ENCODE measurements at regions of chr1 and their contacts with region 1.

Region 1: GRCh38 chr1:5745776-5746610 is 246.2 kb downstream of the NPHP4 start:
- DNase-seq: peak; percentile 75
- H3K4me3 Mint-ChIP-seq: no peak overlapping the region
- H3K27ac Mint-ChIP-seq: no peak overlapping the region
- H3K4me1 Mint-ChIP-seq: peaks cover 6% of the 10 kb centered on the region
- H3K27me3 Mint-ChIP-seq: peaks cover 18% of the 10 kb centered on the region
- CTCF ChIP-seq: peak; percentile 97

Region 2: GRCh38 chr1:4655674-4656532 is 1090.1 kb before region 1 on chr1:
- CTCF ChIA-PET with region 1: no interaction called
- POLR2A ChIA-PET with region 1: no interaction called
- intact Hi-C with region 1: loop called (anchors 2 kb)
- DNase-seq: peak; percentile 75
- H3K4me3 Mint-ChIP-seq: no peak overlapping the region
- H3K27ac Mint-ChIP-seq: no peak overlapping the region
- H3K4me1 Mint-ChIP-seq: no peaks in the 10 kb centered on the region
- H3K27me3 Mint-ChIP-seq: no peaks in the 10 kb centered on the region
- CTCF ChIP-seq: peak; percentile 63

Region 3: DNA sequence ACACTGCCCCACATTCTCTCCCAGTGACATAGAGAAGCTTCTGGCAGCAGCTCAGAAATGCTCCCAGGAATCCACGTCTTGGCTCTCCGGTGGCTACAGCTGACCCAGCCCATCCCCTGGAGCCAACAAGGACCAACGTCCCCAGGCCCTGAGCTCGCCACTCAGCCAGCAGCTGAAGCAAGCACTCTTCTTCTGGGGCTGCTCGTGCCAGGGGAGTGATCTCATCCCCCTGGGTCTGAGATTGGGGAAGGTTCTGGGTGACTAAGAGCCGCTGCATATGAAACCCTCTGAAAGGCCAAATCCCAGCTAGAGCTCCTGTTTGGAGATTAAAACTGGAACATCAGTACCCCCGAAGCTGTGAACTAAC is 241.7 kb before region 1 on chr1:
- CTCF ChIA-PET with region 1: interaction called, 144 read pairs
- POLR2A ChIA-PET with region 1: interaction called, 3 read pairs
- intact Hi-C with region 1: no loop called
- DNase-seq: peak; percentile 16
- H3K4me3 Mint-ChIP-seq: peak overlapping the region; percentile 21
- H3K27ac Mint-ChIP-seq: peak overlapping the region; percentile 46
- H3K4me1 Mint-ChIP-seq: peaks cover 33% of the 10 kb centered on the region
- H3K27me3 Mint-ChIP-seq: peaks cover 3% of the 10 kb centered on the region
- CTCF ChIP-seq: no peak

Region 4: DNA sequence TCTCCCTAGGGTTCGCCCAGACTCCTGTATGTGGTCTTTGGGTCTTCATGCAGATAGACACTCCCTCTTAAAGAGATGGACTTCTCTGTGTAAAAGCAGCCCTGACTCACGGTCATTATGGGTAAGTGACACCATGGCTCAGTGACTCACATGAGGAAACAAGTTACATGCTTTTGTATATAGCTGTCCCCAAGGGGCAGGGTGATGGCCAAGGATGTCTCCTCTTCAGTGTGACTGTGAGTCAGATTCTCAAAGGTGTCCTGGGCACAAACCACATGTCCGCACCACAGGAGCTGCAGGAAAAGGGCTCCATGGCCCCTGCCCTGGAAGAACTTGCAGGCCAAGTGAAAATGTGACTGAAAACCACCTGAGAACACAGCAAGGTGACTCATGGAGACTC is 134.1 kb before region 1 on chr1:
- CTCF ChIA-PET with region 1: interaction called, 12 read pairs
- POLR2A ChIA-PET with region 1: no interaction called
- intact Hi-C with region 1: no loop called
- DNase-seq: no peak
- H3K4me3 Mint-ChIP-seq: no peak overlapping the region
- H3K27ac Mint-ChIP-seq: no peak overlapping the region
- H3K4me1 Mint-ChIP-seq: peaks cover 26% of the 10 kb centered on the region
- H3K27me3 Mint-ChIP-seq: peaks cover 9% of the 10 kb centered on the region
- CTCF ChIP-seq: no peak

Region 5: GRCh38 chr1:5637171-5637570 is 108.8 kb before region 1 on chr1:
- CTCF ChIA-PET with region 1: interaction called, 55 read pairs
- POLR2A ChIA-PET with region 1: no interaction called
- intact Hi-C with region 1: loop called (anchors 1 kb)
- DNase-seq: peak; percentile 51
- H3K4me3 Mint-ChIP-seq: no peak overlapping the region
- H3K27ac Mint-ChIP-seq: no peak overlapping the region
- H3K4me1 Mint-ChIP-seq: no peaks in the 10 kb centered on the region
- H3K27me3 Mint-ChIP-seq: peaks cover 16% of the 10 kb centered on the region
- CTCF ChIP-seq: peak; percentile 72

Region 6: GRCh38 chr1:5905436-5905835 is 159.4 kb after region 1 on chr1:
- CTCF ChIA-PET with region 1: no interaction called
- POLR2A ChIA-PET with region 1: no interaction called
- intact Hi-C with region 1: no loop called
- DNase-seq: no peak
- H3K4me3 Mint-ChIP-seq: no peak overlapping the region
- H3K27ac Mint-ChIP-seq: no peak overlapping the region
- H3K4me1 Mint-ChIP-seq: peaks cover 6% of the 10 kb centered on the region
- H3K27me3 Mint-ChIP-seq: no peaks in the 10 kb centered on the region
- CTCF ChIP-seq: no peak

Region 7: DNA sequence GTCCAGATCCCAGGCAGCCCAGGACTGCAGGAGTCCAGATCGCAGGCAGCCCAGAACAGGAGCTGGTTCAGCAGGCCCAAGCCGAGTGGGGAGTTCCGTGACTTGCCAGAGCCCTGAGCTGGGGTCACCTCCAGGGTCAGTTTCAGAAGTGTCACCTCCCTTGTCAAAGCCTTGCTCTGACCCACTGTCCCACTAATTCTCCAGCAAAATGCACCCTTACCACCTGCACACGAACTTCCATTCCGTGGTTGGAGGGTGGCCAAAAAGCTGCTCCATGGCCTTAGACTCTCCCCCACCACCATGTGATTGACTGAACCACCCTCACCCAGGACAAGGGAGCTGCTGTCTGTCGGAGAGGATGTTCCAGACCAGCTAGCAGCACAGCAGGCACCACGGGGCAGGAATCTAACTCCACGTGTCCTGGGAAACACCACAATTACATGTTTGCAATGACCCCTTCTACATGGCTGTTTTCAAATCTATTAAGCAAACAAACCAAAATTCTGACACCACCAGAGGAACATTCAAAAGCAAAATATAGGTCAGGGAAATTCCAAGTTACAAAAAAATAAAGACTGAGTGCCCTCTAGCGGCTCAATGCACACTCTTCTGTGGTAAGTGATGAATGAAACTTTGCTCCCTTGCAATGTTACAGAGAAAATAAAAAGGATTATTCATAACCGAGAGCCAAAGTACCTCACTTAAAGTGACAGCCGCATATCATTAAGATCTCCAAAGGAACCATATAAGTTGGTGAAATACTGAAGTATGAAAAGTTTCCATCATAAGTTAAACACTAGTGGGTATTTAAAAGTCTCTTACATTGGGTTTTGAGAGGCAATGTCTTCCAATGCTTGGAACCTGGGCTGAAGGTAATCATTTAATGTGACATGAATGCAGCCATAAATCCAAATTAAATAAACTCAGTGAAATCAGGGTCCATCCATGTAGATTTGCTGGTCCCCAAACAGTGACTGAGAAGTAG is 169.9 kb after region 1 on chr1:
- CTCF ChIA-PET with region 1: interaction called, 5 read pairs
- POLR2A ChIA-PET with region 1: no interaction called
- intact Hi-C with region 1: loop called (anchors 5 kb)
- DNase-seq: peak; percentile 42
- H3K4me3 Mint-ChIP-seq: no peak overlapping the region
- H3K27ac Mint-ChIP-seq: no peak overlapping the region
- H3K4me1 Mint-ChIP-seq: peaks cover 7% of the 10 kb centered on the region
- H3K27me3 Mint-ChIP-seq: no peaks in the 10 kb centered on the region
- CTCF ChIP-seq: peak; percentile 62

Measured in MCF 10A (cell line).